Pancreas (tissue), 10 donors: ENCODE measurements at regions of chr12 and their contacts with region 1.

Region 1: DNA sequence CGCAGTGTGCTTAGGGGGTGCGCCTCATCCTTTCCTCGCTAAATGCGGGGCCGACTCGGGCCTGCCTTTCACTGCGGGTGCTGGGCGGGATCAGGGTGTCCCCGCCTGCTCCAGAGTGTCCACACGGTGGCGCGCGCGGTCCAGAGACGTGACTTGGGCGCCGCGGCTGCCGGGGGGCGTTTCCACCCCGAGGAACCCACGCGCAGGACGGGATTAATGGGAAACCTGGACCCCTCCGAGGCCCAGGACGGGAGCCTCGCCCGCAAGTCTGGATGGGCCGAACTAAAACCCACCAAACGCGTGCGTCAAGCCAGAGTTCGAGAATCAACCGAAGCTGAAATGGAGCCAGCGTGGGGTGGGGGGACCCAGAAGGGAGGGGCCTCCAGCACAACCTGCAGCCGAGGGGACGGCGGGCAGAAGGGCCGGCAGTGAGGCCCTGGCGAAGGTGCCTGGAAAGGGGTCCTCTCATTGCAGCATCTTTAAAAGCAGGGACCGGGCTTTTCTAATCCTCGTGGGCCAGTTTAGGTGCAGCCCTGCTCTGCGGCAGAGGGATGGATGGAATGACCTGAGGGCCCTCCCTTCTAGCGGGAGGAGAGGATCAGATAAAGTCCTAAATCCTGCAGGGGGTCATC is 93.3 kb downstream of the NINJ2 start:
- DNase-seq: peak; percentile 65 to 95 (median 83)
- ATAC-seq: peak; percentile 88 to 93 (median 90)
- H3K4me3 ChIP-seq: peak overlapping the region; percentile 29 to 59 (median 41)
- H3K27ac ChIP-seq: peak overlapping the region in 2 of 4 donors; percentile 55 to 72
- H3K4me1 ChIP-seq: no peaks in the 10 kb centered on the region
- H3K27me3 ChIP-seq: no peaks in the 10 kb centered on the region
- CTCF ChIP-seq: peak; percentile 89 to 94 (median 93)

Region 2: DNA sequence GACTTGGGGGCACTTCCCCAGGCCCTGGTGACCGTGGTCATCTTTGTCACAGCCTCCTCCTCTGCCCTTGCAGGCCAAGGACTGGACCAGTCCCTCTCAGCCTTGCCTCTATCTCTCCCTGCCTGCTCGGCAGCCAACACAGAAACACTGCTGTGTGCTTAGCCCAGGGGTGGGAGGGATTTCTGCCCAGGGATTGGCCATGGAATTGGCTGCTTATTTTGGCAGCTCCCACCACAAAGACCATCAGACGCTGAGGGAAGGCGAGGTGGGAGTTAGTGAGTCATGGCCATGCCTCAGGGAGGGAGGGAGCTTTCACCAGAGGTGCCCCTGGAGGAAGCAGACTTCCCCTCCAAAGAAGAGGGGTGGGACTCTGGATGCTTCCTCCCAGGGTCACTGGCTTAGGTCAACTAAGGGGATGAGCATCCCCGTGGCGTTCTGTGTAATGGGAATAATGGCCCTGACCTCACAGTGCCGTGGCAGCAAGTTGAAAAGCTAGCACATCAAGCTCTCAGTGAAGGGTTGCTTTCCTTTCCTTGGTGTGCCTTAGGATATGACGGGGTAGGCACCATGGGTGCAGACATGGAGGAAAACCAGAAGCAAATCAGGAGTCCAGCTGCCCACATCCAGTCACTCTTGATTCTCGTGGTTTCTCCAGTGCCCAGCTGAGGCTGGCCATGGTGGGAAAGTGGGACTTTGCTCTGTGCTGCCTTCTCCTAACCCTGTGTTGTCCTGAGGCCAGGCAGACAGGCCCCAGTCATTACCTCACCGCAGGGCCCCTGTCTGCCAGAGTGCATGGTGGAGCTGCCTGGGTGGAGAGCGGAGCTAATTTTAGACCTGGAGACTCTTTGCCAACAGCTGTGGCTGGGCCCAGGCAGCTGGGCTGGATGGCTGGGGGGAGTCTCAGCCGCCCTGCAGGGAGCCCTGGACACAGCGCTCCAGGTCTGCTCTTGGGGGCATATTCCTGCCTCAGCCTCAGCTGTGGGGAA is 88.8 kb before region 1 on chr12:
- intact Hi-C with region 1: no loop called
- DNase-seq: no peak
- ATAC-seq: peak in 3 of 4 donors; percentile 57 to 76 (median 66)
- H3K4me3 ChIP-seq: no peak overlapping the region
- H3K27ac ChIP-seq: no peak overlapping the region
- H3K4me1 ChIP-seq: no peaks in the 10 kb centered on the region
- H3K27me3 ChIP-seq: no peaks in the 10 kb centered on the region
- CTCF ChIP-seq: no peak

Region 3: GRCh38 chr12:751192-751998 is 181.5 kb after region 1 on chr12:
- intact Hi-C with region 1: loop called in 2 of 3 experiments (anchors 5 to 10 kb)
- DNase-seq: peak; percentile 76 to 90 (median 84)
- ATAC-seq: peak; percentile 46 to 75 (median 62)
- H3K4me3 ChIP-seq: peak overlapping the region in 3 of 4 donors; percentile 75 to 86 (median 79)
- H3K27ac ChIP-seq: peak overlapping the region; percentile 27 to 97 (median 68)
- H3K4me1 ChIP-seq: peaks cover 0 to 16% (median 14%) of the 10 kb centered on the region in 3 donors
- H3K27me3 ChIP-seq: no peaks in the 10 kb centered on the region
- CTCF ChIP-seq: peak in 3 of 4 donors; percentile 31 to 49 (median 34)

Region 4: DNA sequence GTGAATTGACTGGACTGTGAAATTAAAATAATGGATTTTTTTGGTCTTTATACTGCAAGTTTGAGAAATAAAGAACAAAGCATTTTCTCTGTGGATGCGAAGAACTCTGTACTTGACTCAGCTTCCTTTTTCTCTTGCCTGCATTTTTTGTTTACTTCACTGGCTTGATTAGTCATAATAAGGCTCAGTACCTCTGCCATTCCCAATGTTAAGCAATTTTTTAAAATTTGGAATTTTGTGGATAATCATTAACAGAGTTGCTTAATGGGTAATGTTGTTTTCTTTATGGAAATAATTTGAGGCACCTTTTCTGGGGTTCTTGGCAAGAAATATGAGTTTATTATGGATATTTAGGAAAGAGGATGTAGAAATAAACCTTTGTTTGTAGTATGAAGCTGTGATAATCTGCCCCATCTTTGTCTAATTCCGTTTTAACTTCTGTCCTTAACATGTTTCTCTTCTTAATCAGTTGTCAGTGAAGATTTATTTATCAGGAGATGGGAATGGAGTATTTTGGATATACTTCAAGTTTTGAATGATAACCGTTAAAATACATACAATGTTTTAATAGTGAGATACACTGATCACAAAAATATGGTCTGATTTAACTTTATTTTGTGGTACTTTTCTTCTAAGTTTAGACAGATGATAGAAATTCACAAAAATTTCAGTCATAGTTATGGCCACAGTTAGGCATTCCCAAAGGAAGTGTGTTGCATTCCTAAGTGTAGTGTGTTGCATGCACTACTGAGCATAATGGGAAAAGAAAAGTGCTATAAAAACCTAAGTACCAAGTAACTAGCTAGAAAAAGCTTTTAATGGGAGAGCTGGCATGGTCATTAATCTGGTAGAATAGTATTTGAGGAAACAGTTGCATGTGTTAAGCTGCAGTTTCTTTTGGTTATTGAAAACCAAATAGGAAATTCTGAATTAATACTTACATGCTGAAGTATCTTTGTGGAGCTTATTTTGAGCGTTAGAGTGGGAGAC is 210.1 kb after region 1 on chr12:
- intact Hi-C with region 1: no loop called
- DNase-seq: no peak
- ATAC-seq: peak in 3 of 4 donors; percentile 55 to 75 (median 63)
- H3K4me3 ChIP-seq: no peak overlapping the region
- H3K27ac ChIP-seq: peak overlapping the region in 1 of 4 donors; percentile 49
- H3K4me1 ChIP-seq: peaks cover 17 to 41% (median 27%) of the 10 kb centered on the region in 3 donors
- H3K27me3 ChIP-seq: no peaks in the 10 kb centered on the region
- CTCF ChIP-seq: no peak

Region 5: GRCh38 chr12:818733-819132 is 248.8 kb after region 1 on chr12:
- intact Hi-C with region 1: loop called in 1 of 3 experiments (anchors 5 kb)
- DNase-seq: no peak
- ATAC-seq: no peak
- H3K4me3 ChIP-seq: no peak overlapping the region
- H3K27ac ChIP-seq: no peak overlapping the region
- H3K4me1 ChIP-seq: no peaks in the 10 kb centered on the region
- H3K27me3 ChIP-seq: no peaks in the 10 kb centered on the region
- CTCF ChIP-seq: no peak

Region 6: DNA sequence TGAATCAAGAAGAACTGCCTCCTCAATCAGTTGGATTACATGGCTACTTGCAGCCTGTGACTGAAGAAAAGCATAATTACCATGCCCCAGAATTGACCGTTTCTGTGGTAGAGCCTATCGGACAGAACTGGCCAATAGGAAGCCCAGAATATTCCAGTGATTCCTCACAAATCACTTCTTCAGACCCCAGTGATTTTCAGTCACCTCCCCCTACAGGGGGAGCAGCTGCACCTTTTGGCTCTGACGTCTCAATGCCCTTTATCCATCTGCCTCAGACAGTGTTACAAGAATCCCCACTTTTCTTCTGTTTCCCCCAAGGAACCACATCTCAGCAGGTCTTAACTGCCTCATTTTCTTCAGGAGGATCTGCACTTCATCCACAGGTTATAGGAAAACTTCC is 298.8 kb after region 1 on chr12:
- intact Hi-C with region 1: no loop called
- DNase-seq: no peak
- ATAC-seq: no peak
- H3K4me3 ChIP-seq: no peak overlapping the region
- H3K27ac ChIP-seq: no peak overlapping the region
- H3K4me1 ChIP-seq: no peaks in the 10 kb centered on the region
- H3K27me3 ChIP-seq: no peaks in the 10 kb centered on the region
- CTCF ChIP-seq: no peak

Region 7: DNA sequence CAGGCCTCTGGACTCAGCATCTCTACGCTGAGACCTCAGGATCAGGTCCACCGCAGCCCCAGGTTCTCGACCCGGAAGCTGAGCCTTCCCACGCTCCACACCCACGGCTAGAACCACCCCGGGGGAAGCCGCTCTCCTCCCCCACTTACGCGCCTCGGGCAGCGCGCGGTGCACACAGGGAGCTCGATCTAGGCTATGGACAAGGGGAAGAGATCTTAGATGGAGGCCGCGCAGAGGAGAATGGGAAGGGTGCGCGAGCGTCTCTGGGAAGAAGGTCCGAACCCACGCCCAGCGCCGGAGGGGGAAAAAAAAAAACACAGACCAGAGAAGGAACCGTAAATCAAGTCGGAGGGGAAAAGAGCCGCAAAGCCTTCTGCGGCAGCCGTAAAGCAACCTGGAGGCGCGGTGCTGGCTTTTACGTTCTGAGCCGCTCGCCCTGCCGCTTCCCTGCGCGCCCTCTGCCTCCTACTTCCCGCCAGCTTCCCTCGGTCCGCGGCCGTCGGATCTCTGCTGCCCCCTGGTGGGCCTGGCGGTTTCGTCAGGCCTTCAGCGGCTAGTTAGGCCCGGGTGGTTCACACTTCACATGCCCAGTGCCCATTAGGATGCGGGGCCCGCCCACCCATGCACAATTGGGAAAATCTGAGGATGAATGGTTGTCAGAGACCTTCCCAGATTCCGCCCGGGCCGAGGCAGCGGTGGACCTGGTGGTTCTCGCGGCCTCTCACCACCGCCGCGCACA is 379.7 kb after region 1 on chr12 and contains the start of gene RAD52:
- intact Hi-C with region 1: loop called in 2 of 3 experiments (anchors 5 to 10 kb)
- DNase-seq: peak; percentile 97 to 100 (median 97)
- ATAC-seq: peak; percentile 92 to 96 (median 94)
- H3K4me3 ChIP-seq: peak within 1 kb of the TSS; percentile 58 to 77 (median 64)
- H3K27ac ChIP-seq: peak within 1 kb of the TSS; percentile 65 to 88 (median 83)
- H3K4me1 ChIP-seq: peaks cover 0 to 6% (median 4%) of the 10 kb centered on the region in 3 donors
- H3K27me3 ChIP-seq: no peaks in the 10 kb centered on the region
- CTCF ChIP-seq: peak; percentile 87 to 98 (median 96)
- total RNA-seq, gene RAD52: 5.0 to 11.8 (median 6.5) TPM

Region 8: GRCh38 chr12:1093166-1093751 is 523.3 kb after region 1 on chr12:
- intact Hi-C with region 1: loop called in 2 of 3 experiments (anchors 10 kb)
- DNase-seq: peak in 2 of 6 donors; percentile 5 to 26
- ATAC-seq: peak in 3 of 4 donors; percentile 79 to 84 (median 81)
- H3K4me3 ChIP-seq: no peak overlapping the region
- H3K27ac ChIP-seq: no peak overlapping the region
- H3K4me1 ChIP-seq: no peaks in the 10 kb centered on the region
- H3K27me3 ChIP-seq: no peaks in the 10 kb centered on the region
- CTCF ChIP-seq: peak in 3 of 4 donors; percentile 26 to 62 (median 27)